H1 (cell line): ENCODE measurements at regions of chr6 and their contacts with region 1.

Region 1: GRCh38 chr6:138115877-138116660 is 8.8 kb upstream of the PERP start:
- DNase-seq: no peak
- H3K4me3 ChIP-seq: no peak overlapping the region
- H3K27ac ChIP-seq: no peak overlapping the region
- H3K4me1 ChIP-seq: peaks cover 0 to 3% (median 2%) of the 10 kb centered on the region in 4 experiments; a peak in 3 of 7 replicates
- H3K27me3 ChIP-seq: no peaks in the 10 kb centered on the region; a peak in 1 of 7 replicates
- CTCF ChIP-seq: peak in 2 of 3 experiments; percentile 68 to 85; a peak in 3 of 4 replicates
- EP300 ChIP-seq: no peak
- POLR2A ChIP-seq: no peak
- RAD21 ChIP-seq: peak; percentile 95 to 97

Region 2: GRCh38 chr6:138142806-138143205 is 26.7 kb after region 1 on chr6:
- CTCF ChIA-PET with region 1: interaction called, 18 read pairs
- POLR2A ChIA-PET with region 1: interaction called, 4 read pairs
- DNase-seq: no peak
- H3K4me3 ChIP-seq: no peak overlapping the region
- H3K27ac ChIP-seq: no peak overlapping the region
- H3K4me1 ChIP-seq: no peaks in the 10 kb centered on the region
- H3K27me3 ChIP-seq: no peaks in the 10 kb centered on the region
- CTCF ChIP-seq: no peak
- EP300 ChIP-seq: no peak
- POLR2A ChIP-seq: no peak
- RAD21 ChIP-seq: no peak

Region 3: DNA sequence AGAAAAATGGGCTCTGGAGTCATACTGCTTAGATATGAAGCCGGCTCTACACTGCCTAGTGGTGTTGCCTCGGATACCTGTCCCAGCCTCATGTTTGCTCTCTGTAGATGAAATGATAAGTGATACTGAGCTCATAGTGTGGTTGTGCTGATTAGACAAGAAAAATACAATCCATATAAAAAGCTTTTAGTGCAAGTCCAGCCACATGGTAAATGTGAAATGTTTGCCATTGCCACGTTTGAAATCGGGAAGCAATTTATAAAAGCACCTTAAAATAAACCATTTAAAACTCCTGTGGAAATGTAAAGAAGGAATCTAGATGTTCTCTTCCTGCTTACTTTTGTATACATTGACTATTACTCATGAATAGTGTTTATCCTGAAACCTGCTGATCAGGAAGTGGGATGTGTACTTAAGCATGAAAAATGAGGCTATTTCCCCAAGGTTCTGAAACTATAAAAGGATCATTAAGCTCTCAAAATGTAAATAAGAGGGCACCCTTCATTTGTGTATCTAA is 115.4 kb after region 1 on chr6:
- CTCF ChIA-PET with region 1: interaction called, 12 read pairs
- POLR2A ChIA-PET with region 1: no interaction called
- DNase-seq: no peak
- H3K4me3 ChIP-seq: no peak overlapping the region
- H3K27ac ChIP-seq: no peak overlapping the region
- H3K4me1 ChIP-seq: no peaks in the 10 kb centered on the region; a peak in 1 of 7 replicates
- H3K27me3 ChIP-seq: no peaks in the 10 kb centered on the region
- CTCF ChIP-seq: no peak
- EP300 ChIP-seq: no peak
- POLR2A ChIP-seq: no peak
- RAD21 ChIP-seq: no peak

Region 4: GRCh38 chr6:138287144-138287955 is 171.3 kb after region 1 on chr6:
- CTCF ChIA-PET with region 1: interaction called, 106 read pairs
- POLR2A ChIA-PET with region 1: no interaction called
- DNase-seq: peak in 1 of 2 experiments; percentile 81
- H3K4me3 ChIP-seq: no peak overlapping the region
- H3K27ac ChIP-seq: no peak overlapping the region
- H3K4me1 ChIP-seq: peaks cover 2 to 8% (median 4%) of the 10 kb centered on the region in 4 experiments; a peak in 5 of 7 replicates
- H3K27me3 ChIP-seq: no peaks in the 10 kb centered on the region
- CTCF ChIP-seq: peak; percentile 74 to 90 (median 83)
- EP300 ChIP-seq: no peak
- POLR2A ChIP-seq: no peak
- RAD21 ChIP-seq: peak; percentile 62 to 70

Region 5: GRCh38 chr6:138403801-138404661 is 288.0 kb after region 1 on chr6 and contains the start of gene HEBP2:
- CTCF ChIA-PET with region 1: interaction called, 35 read pairs
- POLR2A ChIA-PET with region 1: no interaction called
- DNase-seq: peak; percentile 92 to 97
- H3K4me3 ChIP-seq: peak within 1 kb of the TSS; percentile 57 to 86 (median 82)
- H3K27ac ChIP-seq: peak within 1 kb of the TSS; percentile 77
- H3K4me1 ChIP-seq: peaks cover 0 to 3% (median 0%) of the 10 kb centered on the region in 4 experiments; a peak in 3 of 7 replicates
- H3K27me3 ChIP-seq: no peaks in the 10 kb centered on the region; a peak in 1 of 7 replicates
- CTCF ChIP-seq: peak; percentile 79 to 83 (median 80)
- EP300 ChIP-seq: peak; percentile 25 to 92; a peak in 2 of 3 replicates
- POLR2A ChIP-seq: peak in 1 of 2 experiments; percentile 79; a peak in 2 of 3 replicates
- RAD21 ChIP-seq: peak; percentile 78 to 80
- total RNA-seq, gene HEBP2: 37.9 and 42.8 TPM in 2 replicates

Region 6: DNA sequence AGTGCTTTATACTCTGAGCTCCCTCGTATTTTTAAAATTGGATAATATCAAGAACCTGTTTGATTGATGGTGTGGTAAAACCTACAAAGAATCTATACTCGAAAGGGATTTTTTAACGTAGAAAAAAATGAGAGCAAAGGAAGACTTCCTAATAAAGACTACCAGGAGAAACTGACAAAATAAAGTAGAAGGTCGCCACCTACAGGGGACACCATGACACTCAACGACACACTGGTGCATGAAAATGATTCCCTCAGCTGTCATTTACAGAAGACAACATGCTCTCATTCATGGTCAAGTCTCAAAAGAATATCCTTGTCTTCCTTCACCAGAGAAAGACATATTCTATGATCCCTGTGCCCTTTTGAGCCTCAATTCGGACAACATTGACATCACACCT is 393.3 kb after region 1 on chr6:
- CTCF ChIA-PET with region 1: interaction called, 12 read pairs
- POLR2A ChIA-PET with region 1: no interaction called
- DNase-seq: no peak
- H3K4me3 ChIP-seq: no peak overlapping the region
- H3K27ac ChIP-seq: no peak overlapping the region
- H3K4me1 ChIP-seq: peaks cover 0 to 7% (median 2%) of the 10 kb centered on the region in 4 experiments; a peak in 3 of 7 replicates
- H3K27me3 ChIP-seq: peaks cover 0 to 1% (median 0%) of the 10 kb centered on the region in 4 experiments; a peak in 1 of 7 replicates
- CTCF ChIP-seq: peak; percentile 30 to 78 (median 50)
- EP300 ChIP-seq: no peak
- POLR2A ChIP-seq: no peak
- RAD21 ChIP-seq: peak; percentile 83 to 84